Caco-2 (cell line): ENCODE measurements at regions of chr1 and their contacts with region 1.

Region 1: GRCh38 chr1:212782422-212783154 is 9.0 kb downstream of the NSL1 start:
- DNase-seq: no peak
- H3K4me3 ChIP-seq: no peak overlapping the region
- H3K4me3 Mint-ChIP-seq: no peak overlapping the region
- H3K27ac Mint-ChIP-seq: no peak overlapping the region
- H3K4me1 ChIP-seq: no peaks in the 10 kb centered on the region
- H3K4me1 Mint-ChIP-seq: no peaks in the 10 kb centered on the region
- H3K27me3 ChIP-seq: no peaks in the 10 kb centered on the region
- H3K27me3 Mint-ChIP-seq: no peaks in the 10 kb centered on the region
- CTCF ChIP-seq: peak; percentile 52 to 60

Region 2: DNA sequence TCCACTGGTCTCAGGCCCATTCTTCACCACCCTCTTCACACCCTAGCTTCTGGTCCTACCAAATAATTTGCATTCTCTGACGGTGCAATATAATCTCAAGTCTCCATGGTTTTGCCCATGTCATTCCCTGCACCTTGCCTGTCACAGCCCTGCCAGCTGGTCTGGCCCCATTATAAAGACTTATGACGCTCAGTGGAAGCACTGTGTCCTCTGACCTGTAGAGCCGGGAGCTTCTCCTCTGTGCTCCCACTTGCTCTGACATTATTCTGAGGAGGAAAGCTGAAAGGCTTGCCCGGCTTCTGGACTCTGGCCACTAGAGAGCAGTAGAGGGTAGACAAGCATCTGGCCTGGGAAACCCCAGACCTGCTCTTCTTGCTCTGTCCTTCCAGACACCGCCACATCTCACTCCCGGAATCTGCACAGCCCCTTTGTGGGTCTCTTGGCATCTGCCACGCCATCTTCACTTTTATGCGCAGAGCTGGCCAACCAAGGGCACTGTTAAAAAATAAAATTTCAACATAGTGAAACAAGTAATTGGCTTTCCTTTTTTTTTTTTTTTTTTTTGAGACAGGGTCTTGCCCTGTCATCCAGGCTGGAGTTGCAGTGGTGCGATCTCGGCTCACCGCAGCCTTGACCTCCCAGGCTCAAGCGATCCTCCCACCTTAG is 305.4 kb before region 1 on chr1:
- CTCF ChIA-PET with region 1: no interaction called
- POLR2A ChIA-PET with region 1: no interaction called
- intact Hi-C with region 1: loop called (anchors 1 kb)
- DNase-seq: peak; percentile 88 to 91
- H3K4me3 ChIP-seq: no peak overlapping the region
- H3K4me3 Mint-ChIP-seq: no peak overlapping the region
- H3K27ac Mint-ChIP-seq: no peak overlapping the region
- H3K4me1 ChIP-seq: peaks cover 5% of the 10 kb centered on the region
- H3K4me1 Mint-ChIP-seq: peaks cover 7% of the 10 kb centered on the region
- H3K27me3 ChIP-seq: no peaks in the 10 kb centered on the region
- H3K27me3 Mint-ChIP-seq: no peaks in the 10 kb centered on the region
- CTCF ChIP-seq: peak; percentile 94 to 95

Region 3: GRCh38 chr1:212595787-212596714 is 186.5 kb before region 1 on chr1:
- CTCF ChIA-PET with region 1: no interaction called
- POLR2A ChIA-PET with region 1: no interaction called
- intact Hi-C with region 1: loop called (anchors 1 kb)
- DNase-seq: peak; percentile 55 to 67
- H3K4me3 ChIP-seq: no peak overlapping the region
- H3K4me3 Mint-ChIP-seq: peak overlapping the region; percentile 54
- H3K27ac Mint-ChIP-seq: peak overlapping the region; percentile 85
- H3K4me1 ChIP-seq: peaks cover 33% of the 10 kb centered on the region
- H3K4me1 Mint-ChIP-seq: peaks cover 49% of the 10 kb centered on the region
- H3K27me3 ChIP-seq: no peaks in the 10 kb centered on the region
- H3K27me3 Mint-ChIP-seq: no peaks in the 10 kb centered on the region
- CTCF ChIP-seq: peak; percentile 63 to 74

Region 4: DNA sequence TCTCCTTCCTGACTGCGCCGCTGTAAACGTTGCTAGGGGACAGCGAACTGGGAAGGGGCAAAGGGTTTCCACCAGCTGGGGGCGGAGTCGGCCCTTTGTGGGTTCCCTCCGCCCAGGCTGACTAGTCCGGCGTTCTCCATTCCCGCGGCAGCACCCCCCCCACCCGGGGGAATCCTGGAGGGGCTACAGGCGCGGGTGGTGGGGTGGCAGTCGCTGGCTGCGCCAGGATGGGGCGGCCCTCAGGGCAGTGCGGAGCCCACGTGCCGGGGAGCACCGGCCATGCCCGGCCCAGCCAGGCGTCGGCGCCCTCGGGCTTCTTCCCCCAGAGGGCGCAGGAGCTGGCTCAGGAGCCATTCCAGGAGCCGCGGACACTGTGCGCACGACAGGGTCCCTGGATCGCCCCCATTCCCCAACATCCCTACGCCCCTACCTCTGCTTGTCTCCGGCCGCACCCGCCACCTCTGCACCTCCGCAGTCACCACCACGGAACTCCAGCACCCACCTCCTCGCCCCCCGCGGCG is 83.4 kb before region 1 on chr1:
- CTCF ChIA-PET with region 1: no interaction called
- POLR2A ChIA-PET with region 1: no interaction called
- intact Hi-C with region 1: loop called (anchors 1 kb)
- DNase-seq: peak; percentile 46 to 76
- H3K4me3 ChIP-seq: peak overlapping the region; percentile 58
- H3K4me3 Mint-ChIP-seq: peak overlapping the region; percentile 73
- H3K27ac Mint-ChIP-seq: no peak overlapping the region
- H3K4me1 ChIP-seq: peaks cover 37% of the 10 kb centered on the region
- H3K4me1 Mint-ChIP-seq: peaks cover 22% of the 10 kb centered on the region
- H3K27me3 ChIP-seq: peaks cover 8% of the 10 kb centered on the region
- H3K27me3 Mint-ChIP-seq: peaks cover 35% of the 10 kb centered on the region
- CTCF ChIP-seq: peak in 1 of 2 experiments; percentile 73

Region 5: GRCh38 chr1:212749821-212750535 is 32.6 kb before region 1 on chr1:
- CTCF ChIA-PET with region 1: interaction called, 11 read pairs
- POLR2A ChIA-PET with region 1: no interaction called
- intact Hi-C with region 1: loop called (anchors 1 kb)
- DNase-seq: peak in 1 of 2 experiments; percentile 47
- H3K4me3 ChIP-seq: no peak overlapping the region
- H3K4me3 Mint-ChIP-seq: no peak overlapping the region
- H3K27ac Mint-ChIP-seq: peak overlapping the region; percentile 3
- H3K4me1 ChIP-seq: no peaks in the 10 kb centered on the region
- H3K4me1 Mint-ChIP-seq: peaks cover 8% of the 10 kb centered on the region
- H3K27me3 ChIP-seq: no peaks in the 10 kb centered on the region
- H3K27me3 Mint-ChIP-seq: no peaks in the 10 kb centered on the region
- CTCF ChIP-seq: peak; percentile 77 to 80

Region 6: DNA sequence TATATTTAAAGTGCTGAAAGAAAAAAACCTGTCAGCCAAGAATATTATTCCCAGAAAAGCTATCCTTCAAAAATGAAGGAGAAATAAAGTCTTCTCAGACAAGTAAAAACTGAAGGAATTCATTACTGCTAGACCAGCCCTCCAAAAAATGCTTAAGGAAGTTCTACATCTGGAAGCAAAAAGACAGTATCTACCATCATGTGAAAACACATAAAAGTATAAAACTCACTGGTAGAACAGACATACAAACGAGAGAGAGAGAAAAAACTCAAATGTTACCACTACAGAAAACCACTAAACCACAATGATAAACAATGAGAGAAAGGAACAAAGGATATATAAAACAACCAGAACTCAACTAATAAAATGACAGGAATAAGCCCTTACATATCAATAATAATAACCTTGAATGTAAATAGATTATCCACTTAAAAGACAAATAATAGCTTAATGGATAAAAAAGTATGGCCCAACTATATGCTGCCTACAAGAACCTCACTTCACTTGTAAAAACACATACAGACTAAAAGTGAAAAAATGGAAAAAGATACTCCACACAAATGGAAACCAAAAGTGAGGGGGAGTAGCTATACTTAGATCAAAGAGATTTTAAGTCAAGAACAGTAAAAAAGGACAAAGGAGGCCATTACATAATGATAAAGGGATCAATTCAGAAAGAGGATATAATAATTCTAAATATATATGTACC is 13.0 kb before region 1 on chr1:
- CTCF ChIA-PET with region 1: no interaction called
- POLR2A ChIA-PET with region 1: no interaction called
- intact Hi-C with region 1: no loop called
- DNase-seq: no peak
- H3K4me3 ChIP-seq: no peak overlapping the region
- H3K4me3 Mint-ChIP-seq: no peak overlapping the region
- H3K27ac Mint-ChIP-seq: no peak overlapping the region
- H3K4me1 ChIP-seq: no peaks in the 10 kb centered on the region
- H3K4me1 Mint-ChIP-seq: no peaks in the 10 kb centered on the region
- H3K27me3 ChIP-seq: no peaks in the 10 kb centered on the region
- H3K27me3 Mint-ChIP-seq: no peaks in the 10 kb centered on the region
- CTCF ChIP-seq: no peak

Region 7: GRCh38 chr1:212994926-212995325 is 212.3 kb after region 1 on chr1:
- CTCF ChIA-PET with region 1: no interaction called
- POLR2A ChIA-PET with region 1: no interaction called
- intact Hi-C with region 1: loop called (anchors 1 kb)
- DNase-seq: no peak
- H3K4me3 ChIP-seq: no peak overlapping the region
- H3K4me3 Mint-ChIP-seq: no peak overlapping the region
- H3K27ac Mint-ChIP-seq: no peak overlapping the region
- H3K4me1 ChIP-seq: no peaks in the 10 kb centered on the region
- H3K4me1 Mint-ChIP-seq: no peaks in the 10 kb centered on the region
- H3K27me3 ChIP-seq: no peaks in the 10 kb centered on the region
- H3K27me3 Mint-ChIP-seq: no peaks in the 10 kb centered on the region
- CTCF ChIP-seq: no peak